ENCODE measurements at regions of chr9 and their contacts with region 1.

Region 1: GRCh38 chr9:26892251-26893029 is at the start of gene CAAP1:
- DNase-seq: peak; percentile 93
- H3K4me3 ChIP-seq: peak within 1 kb of the TSS; percentile 87 to 100 (median 99)
- H3K27ac ChIP-seq: peak within 1 kb of the TSS; percentile 83
- H3K4me1 ChIP-seq: peaks cover 25% of the 10 kb centered on the region
- H3K27me3 ChIP-seq: no peaks in the 10 kb centered on the region
- CTCF ChIP-seq: peak in 1 of 2 donors; percentile 43
- POLR2A ChIP-seq: peak; percentile 94
- total RNA-seq, gene CAAP1: 16.1 and 18.6 TPM in 2 replicates

Region 2: DNA sequence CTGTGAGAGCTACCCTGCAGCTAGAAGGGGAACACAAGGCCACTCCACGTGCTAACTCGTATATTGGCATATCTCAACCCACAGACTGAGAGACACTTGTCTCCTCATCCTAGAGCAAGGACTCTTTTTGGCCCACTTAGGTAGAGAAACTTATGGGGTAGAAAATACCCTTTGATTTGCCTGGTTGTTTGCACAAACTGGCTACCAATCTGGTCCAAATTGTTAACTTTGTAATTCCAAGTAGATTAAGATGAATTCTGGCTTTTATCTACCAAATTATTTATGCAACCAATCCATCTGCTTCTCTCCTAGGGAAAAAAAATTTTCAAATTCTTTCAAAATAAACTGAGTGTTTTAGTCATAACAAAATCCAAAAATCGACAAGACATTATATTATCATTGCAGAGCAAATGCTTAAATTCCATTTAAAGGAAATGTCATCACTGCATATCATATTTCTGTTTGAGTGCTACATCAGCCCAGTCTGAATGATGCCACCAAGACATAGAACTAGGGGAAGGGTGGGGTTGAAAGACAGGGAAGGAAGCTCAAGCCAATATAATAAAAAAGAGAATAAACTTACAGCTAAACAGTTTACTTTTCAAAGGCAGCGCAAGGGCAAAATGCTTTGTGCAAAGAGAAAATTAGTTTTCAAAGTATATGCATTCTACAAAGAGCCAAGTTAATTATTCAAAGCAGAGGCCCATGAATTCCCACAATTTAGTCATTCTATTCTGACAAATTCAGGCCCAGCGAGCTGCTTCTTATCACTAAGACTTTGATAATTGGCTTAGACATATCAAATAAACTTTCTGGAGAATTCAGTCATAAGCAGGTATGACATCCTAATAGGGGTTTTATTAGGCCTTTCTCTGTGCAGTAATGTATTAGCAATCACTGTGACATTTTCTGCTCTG is 197.8 kb before region 1 on chr9:
- CTCF ChIA-PET with region 1: no interaction called
- POLR2A ChIA-PET with region 1: no interaction called
- dilution Hi-C with region 1: no loop called
- intact Hi-C with region 1: no loop called
- DNase-seq: no peak
- H3K4me3 ChIP-seq: no peak overlapping the region
- H3K27ac ChIP-seq: no peak overlapping the region
- H3K4me1 ChIP-seq: no peaks in the 10 kb centered on the region
- H3K27me3 ChIP-seq: no peaks in the 10 kb centered on the region
- CTCF ChIP-seq: no peak
- POLR2A ChIP-seq: no peak

Region 3: GRCh38 chr9:26946753-26947727 is 54.6 kb after region 1 on chr9 and contains the start of gene PLAA:
- CTCF ChIA-PET with region 1: interaction called, 3 read pairs
- POLR2A ChIA-PET with region 1: no interaction called
- dilution Hi-C with region 1: no loop called
- intact Hi-C with region 1: loop called (anchors 1 kb)
- DNase-seq: peak; percentile 91
- H3K4me3 ChIP-seq: peak within 1 kb of the TSS; percentile 70 to 90 (median 80)
- H3K27ac ChIP-seq: peak within 1 kb of the TSS; percentile 90
- H3K4me1 ChIP-seq: peaks cover 15% of the 10 kb centered on the region
- H3K27me3 ChIP-seq: no peaks in the 10 kb centered on the region
- CTCF ChIP-seq: no peak
- POLR2A ChIP-seq: peak; percentile 77
- total RNA-seq, gene PLAA: 36.9 and 37.9 TPM in 2 replicates

Region 4: GRCh38 chr9:26955921-26956859 is 63.8 kb after region 1 on chr9 and contains the start of gene IFT74:
- CTCF ChIA-PET with region 1: interaction called, 4 read pairs
- POLR2A ChIA-PET with region 1: interaction called, 4 read pairs
- dilution Hi-C with region 1: no loop called
- intact Hi-C with region 1: loop called (anchors 2 kb)
- DNase-seq: peak; percentile 98
- H3K4me3 ChIP-seq: peak within 1 kb of the TSS; percentile 46 to 85 (median 68)
- H3K27ac ChIP-seq: peak within 1 kb of the TSS; percentile 76
- H3K4me1 ChIP-seq: peaks cover 14% of the 10 kb centered on the region
- H3K27me3 ChIP-seq: no peaks in the 10 kb centered on the region
- CTCF ChIP-seq: no peak
- POLR2A ChIP-seq: peak; percentile 81
- total RNA-seq, gene IFT74: 7.8 and 10.8 TPM in 2 replicates

Region 5: GRCh38 chr9:27573634-27574590 is 681.5 kb after region 1 on chr9:
- CTCF ChIA-PET with region 1: no interaction called
- POLR2A ChIA-PET with region 1: no interaction called
- dilution Hi-C with region 1: no loop called
- intact Hi-C with region 1: loop called (anchors 2 kb)
- DNase-seq: peak; percentile 99
- H3K4me3 ChIP-seq: peak overlapping the region; percentile 68 to 72 (median 70)
- H3K27ac ChIP-seq: peak overlapping the region; percentile 87
- H3K4me1 ChIP-seq: peaks cover 12% of the 10 kb centered on the region
- H3K27me3 ChIP-seq: peaks cover 0 to under 1% of the 10 kb centered on the region in 2 experiments
- CTCF ChIP-seq: no peak
- POLR2A ChIP-seq: no peak

Measured in endothelial cell of umbilical vein (primary cell).